Right ventricle myocardium inferior (tissue), 1 donor: ENCODE measurements at regions of chr17 and their contacts with region 1.

Region 1: DNA sequence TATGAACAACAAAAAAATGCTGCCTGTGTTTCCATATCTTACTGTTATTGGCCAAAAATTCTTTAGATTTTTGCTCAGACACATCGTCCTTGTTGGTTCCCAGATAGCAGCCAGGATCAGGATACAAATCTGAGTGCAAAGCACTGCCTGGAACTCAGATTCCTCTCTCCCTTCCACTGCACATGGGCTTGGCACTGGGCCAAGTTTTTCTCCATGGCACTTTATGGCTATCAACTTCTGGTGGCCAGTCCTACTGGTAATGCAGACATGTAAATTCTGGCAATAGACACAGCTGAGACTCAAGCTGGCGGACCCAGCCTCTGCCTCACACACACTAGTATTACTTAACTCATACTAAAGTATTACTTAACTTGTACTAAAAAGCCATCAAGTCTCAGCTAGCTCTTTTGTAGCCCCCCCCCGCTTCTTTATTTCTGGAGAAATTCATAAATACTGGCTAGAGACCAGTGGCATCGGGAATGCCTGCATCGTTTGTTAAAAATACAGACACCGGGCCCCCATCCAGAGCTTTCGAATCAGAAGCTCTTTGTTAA is 181.2 kb upstream of the COX10 start:
- DNase-seq: no peak
- ATAC-seq: no peak

Region 2: GRCh38 chr17:13647543-13648021 is 240.6 kb before region 1 on chr17:
- intact Hi-C with region 1: loop called (anchors 10 kb)
- DNase-seq: no peak
- ATAC-seq: peak; percentile 10

Region 3: DNA sequence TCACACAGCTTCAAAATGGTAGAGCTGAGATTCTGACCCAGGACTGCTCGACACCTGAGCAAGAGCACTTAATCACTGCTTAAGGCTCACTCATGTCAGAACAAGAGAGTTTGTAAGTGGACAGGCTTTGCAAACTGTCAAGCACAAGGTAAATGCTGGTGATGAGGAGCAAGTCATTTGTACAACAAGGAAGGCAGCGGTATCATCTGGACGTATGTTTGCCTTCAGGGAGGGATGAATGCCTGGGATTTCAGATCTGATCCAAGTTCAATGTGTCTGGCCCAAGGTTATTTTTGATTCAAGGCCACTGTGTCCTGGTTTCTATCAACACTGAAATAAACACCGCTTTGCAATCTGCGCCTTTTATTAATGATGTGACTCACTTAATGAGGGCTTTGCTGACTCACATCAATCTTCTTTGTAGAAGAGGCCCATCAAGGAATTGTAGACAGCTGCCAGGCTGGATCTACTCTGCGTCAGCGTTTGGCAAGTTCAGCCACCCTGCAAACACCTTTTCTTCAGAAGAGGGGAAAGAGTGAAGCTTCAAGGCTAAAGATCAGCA is 112.0 kb before region 1 on chr17:
- intact Hi-C with region 1: loop called (anchors 5 kb)
- DNase-seq: no peak
- ATAC-seq: peak; percentile 93

Region 4: GRCh38 chr17:14101976-14102375 is 213.8 kb after region 1 on chr17:
- intact Hi-C with region 1: no loop called
- DNase-seq: no peak
- ATAC-seq: no peak